PC-9 (cell line): ENCODE measurements at regions of chr15 and their contacts with region 1.

Region 1: DNA sequence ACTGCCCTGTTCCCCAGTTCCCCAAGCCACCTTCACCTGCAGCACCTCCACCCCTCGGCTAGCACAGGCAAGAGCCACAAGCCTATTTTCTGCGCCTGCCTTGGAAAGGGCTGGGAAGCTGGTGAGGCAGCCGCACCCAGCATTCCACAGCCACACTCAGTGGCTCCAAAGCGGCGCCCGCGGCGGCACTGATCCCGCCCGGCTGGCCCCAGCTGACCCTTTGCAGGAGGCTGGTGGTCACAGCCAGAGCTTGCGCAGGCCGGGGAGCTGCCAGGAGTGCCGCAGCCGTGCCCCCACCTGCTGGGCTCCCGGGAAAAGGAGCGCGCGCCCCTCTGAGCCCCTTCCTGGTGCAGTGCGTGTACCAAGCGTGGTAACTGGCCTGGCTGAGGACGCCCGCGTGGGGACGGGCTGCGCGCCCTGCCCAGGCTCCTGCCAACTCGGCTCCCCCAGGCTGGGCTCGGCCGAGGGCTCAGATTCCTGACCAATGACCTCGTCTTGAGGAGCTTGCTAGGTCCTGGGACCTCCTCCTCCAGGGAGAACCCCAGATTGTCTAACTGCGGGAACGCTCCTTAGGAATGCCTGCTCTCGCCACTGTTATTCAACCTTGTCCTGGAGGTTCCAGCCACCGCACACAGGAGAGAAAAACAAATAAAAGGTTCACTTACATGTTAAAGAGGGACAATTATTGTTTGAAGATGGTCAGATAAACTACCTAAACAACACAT is 13.3 kb downstream of the GRAMD2A start:
- DNase-seq: peak; percentile 79 to 89
- H3K4me3 ChIP-seq: peak overlapping the region; percentile 55
- H3K27ac ChIP-seq: peak overlapping the region; percentile 72
- H3K4me1 ChIP-seq: peaks cover 61% of the 10 kb centered on the region
- H3K27me3 ChIP-seq: no peaks in the 10 kb centered on the region
- CTCF ChIP-seq: no peak

Region 2: DNA sequence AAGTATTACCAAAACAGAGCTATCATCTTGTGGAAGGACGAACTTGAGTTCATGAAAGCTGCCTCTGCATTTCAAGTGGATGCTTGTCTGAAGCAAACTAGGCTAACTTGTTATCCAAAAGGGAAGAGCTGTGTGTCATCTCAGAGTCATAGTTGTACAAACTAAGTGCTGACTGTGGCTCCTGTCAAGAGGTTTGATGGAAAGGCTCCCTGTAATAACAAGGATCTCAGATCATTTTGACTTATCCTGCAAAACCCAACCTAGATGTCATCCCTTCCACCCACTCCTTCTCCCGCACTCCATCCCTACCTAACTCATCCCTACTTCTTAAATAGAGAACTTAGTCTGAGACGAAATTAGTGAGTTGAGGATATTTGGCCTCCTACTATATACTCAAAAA is 263.1 kb before region 1 on chr15:
- CTCF ChIA-PET with region 1: no interaction called
- POLR2A ChIA-PET with region 1: interaction called, 11 read pairs
- intact Hi-C with region 1: no loop called
- DNase-seq: no peak
- H3K4me3 ChIP-seq: no peak overlapping the region
- H3K27ac ChIP-seq: no peak overlapping the region
- H3K4me1 ChIP-seq: no peaks in the 10 kb centered on the region
- H3K27me3 ChIP-seq: no peaks in the 10 kb centered on the region
- CTCF ChIP-seq: no peak

Region 3: GRCh38 chr15:72098040-72098439 is 86.3 kb before region 1 on chr15:
- CTCF ChIA-PET with region 1: no interaction called
- POLR2A ChIA-PET with region 1: no interaction called
- intact Hi-C with region 1: no loop called
- DNase-seq: no peak
- H3K4me3 ChIP-seq: no peak overlapping the region
- H3K27ac ChIP-seq: no peak overlapping the region
- H3K4me1 ChIP-seq: no peaks in the 10 kb centered on the region
- H3K27me3 ChIP-seq: no peaks in the 10 kb centered on the region
- CTCF ChIP-seq: no peak

Region 4: DNA sequence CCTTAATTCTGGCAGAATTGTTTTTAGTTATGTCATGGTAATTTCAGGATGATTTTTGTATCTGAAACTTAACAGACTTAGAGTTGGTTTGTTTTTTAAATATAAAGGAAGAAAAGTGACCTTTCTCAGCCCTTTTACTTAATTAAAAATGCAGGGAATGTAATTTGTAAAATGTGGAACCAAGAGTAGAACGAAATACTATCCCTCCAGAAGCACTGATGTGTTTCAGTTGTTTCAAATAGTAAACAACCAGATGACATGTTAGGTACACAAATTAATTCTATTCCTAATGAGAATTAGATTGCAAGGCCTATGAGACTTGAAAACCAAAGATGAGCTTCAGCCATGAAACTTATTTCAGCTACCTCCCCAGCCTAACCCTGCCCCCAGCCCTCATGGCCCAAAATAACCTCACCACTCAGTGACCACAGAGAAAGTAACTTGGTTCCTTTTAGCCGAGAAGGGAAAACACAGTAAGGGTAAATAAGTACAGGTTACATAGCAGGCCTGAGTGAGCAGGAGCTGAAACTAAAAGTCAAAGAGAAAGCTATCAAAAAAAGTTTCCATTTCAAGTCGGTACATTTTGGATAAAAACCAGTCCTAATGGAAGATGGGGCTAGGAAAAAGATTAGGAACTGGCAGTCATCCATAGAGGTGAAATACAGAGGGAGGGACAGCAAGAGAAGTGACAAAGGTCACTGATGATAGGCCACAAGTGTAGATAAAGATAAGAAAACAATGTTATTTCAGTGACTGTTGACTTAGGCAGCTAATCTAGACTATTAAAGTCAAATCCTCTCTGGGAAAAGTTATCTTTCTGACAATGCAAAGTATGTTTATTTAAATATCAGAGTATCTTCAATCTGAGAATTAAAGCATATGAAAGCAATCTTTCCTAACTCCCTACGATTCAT is 42.9 kb before region 1 on chr15:
- CTCF ChIA-PET with region 1: no interaction called
- POLR2A ChIA-PET with region 1: no interaction called
- intact Hi-C with region 1: no loop called
- DNase-seq: no peak
- H3K4me3 ChIP-seq: no peak overlapping the region
- H3K27ac ChIP-seq: no peak overlapping the region
- H3K4me1 ChIP-seq: no peaks in the 10 kb centered on the region
- H3K27me3 ChIP-seq: no peaks in the 10 kb centered on the region
- CTCF ChIP-seq: no peak